CD8-positive, alpha-beta memory T cell (primary cell): ENCODE measurements at regions of chr17 and their contacts with region 1.

Region 1: GRCh38 chr17:79087428-79088143 is 13.0 kb downstream of the ENGASE start:
- DNase-seq: peak; percentile 45 to 78 (median 62)
- H3K4me3 ChIP-seq: no peak overlapping the region
- H3K4me3 Mint-ChIP-seq: no peak overlapping the region
- H3K27ac ChIP-seq: no peak overlapping the region
- H3K27ac Mint-ChIP-seq: peak overlapping the region in 1 of 8 donors; percentile 66
- H3K4me1 ChIP-seq: no peaks in the 10 kb centered on the region
- H3K4me1 Mint-ChIP-seq: peaks cover 4 to 6% (median 5%) of the 10 kb centered on the region in 3 donors
- H3K27me3 ChIP-seq: no peaks in the 10 kb centered on the region
- H3K27me3 Mint-ChIP-seq: peaks cover 0 to 6% of the 10 kb centered on the region in 2 donors

Region 2: GRCh38 chr17:79045842-79046196 is 41.8 kb before region 1 on chr17:
- CTCF ChIA-PET with region 1: interaction called, 10 read pairs
- POLR2A ChIA-PET with region 1: no interaction called
- DNase-seq: peak; percentile 32 to 63 (median 41)
- H3K4me3 ChIP-seq: no peak overlapping the region
- H3K4me3 Mint-ChIP-seq: no peak overlapping the region
- H3K27ac ChIP-seq: no peak overlapping the region
- H3K27ac Mint-ChIP-seq: peak overlapping the region in 2 of 8 donors; percentile 21 to 42
- H3K4me1 ChIP-seq: no peaks in the 10 kb centered on the region
- H3K4me1 Mint-ChIP-seq: peaks cover 4 to 5% (median 4%) of the 10 kb centered on the region in 3 donors
- H3K27me3 ChIP-seq: no peaks in the 10 kb centered on the region
- H3K27me3 Mint-ChIP-seq: peaks cover 23 to 29% of the 10 kb centered on the region in 2 donors

Region 3: DNA sequence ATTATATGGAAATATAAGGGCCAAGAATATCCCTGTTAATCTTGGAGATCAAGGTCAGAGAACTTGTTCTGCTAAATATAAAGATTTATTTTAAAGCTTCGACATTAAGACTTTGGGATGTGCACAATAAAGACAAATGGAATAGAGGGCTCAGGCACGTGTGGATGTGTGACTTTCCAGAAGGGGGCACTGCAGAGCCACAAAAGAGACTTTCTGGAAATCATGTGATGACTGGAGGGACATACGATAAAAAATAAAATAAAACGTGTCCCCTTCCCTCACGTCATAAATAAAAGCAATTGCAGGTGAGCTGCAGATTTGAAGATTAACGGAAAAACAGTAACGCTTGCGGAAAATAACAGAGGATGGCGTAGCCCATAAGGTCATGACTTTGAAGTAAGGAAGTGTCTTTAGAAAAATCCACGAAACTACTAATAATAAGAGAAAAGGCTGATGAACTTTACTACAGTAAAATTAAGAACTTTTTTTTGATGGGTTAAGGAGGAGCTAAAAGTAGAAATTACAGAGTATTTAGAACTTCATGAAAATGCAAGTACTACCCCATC is 22.4 kb before region 1 on chr17:
- CTCF ChIA-PET with region 1: interaction called, 23 read pairs
- POLR2A ChIA-PET with region 1: no interaction called
- DNase-seq: peak; percentile 28 to 67 (median 43)
- H3K4me3 ChIP-seq: no peak overlapping the region
- H3K4me3 Mint-ChIP-seq: peak overlapping the region in 1 of 7 donors; percentile 68
- H3K27ac ChIP-seq: no peak overlapping the region
- H3K27ac Mint-ChIP-seq: no peak overlapping the region
- H3K4me1 ChIP-seq: peaks cover 3% of the 10 kb centered on the region
- H3K4me1 Mint-ChIP-seq: peaks cover 0 to 3% (median 2%) of the 10 kb centered on the region in 3 donors
- H3K27me3 ChIP-seq: no peaks in the 10 kb centered on the region
- H3K27me3 Mint-ChIP-seq: peaks cover 4 to 8% of the 10 kb centered on the region in 2 donors

Region 4: GRCh38 chr17:79393358-79394202 is 306.0 kb after region 1 on chr17:
- CTCF ChIA-PET with region 1: interaction called, 52 read pairs
- POLR2A ChIA-PET with region 1: no interaction called
- DNase-seq: peak; percentile 27 to 63 (median 51)
- H3K4me3 ChIP-seq: no peak overlapping the region
- H3K4me3 Mint-ChIP-seq: no peak overlapping the region
- H3K27ac ChIP-seq: no peak overlapping the region
- H3K27ac Mint-ChIP-seq: no peak overlapping the region
- H3K4me1 ChIP-seq: peaks cover 4% of the 10 kb centered on the region
- H3K4me1 Mint-ChIP-seq: peaks cover 2 to 8% (median 8%) of the 10 kb centered on the region in 3 donors
- H3K27me3 ChIP-seq: peaks cover 33% of the 10 kb centered on the region
- H3K27me3 Mint-ChIP-seq: peaks cover 30 to 64% of the 10 kb centered on the region in 2 donors